Heart left ventricle (tissue), 16 donors: ENCODE measurements at regions of chr6 and their contacts with region 1.

Region 1: GRCh38 chr6:145734486-145735355 is 599 bp downstream of the EPM2A start:
- DNase-seq: peak; percentile 91 to 95 (median 94)
- ATAC-seq: peak; percentile 84 to 97 (median 92)
- H3K4me3 ChIP-seq: peak overlapping the region; percentile 43 to 87 (median 72)
- H3K27ac ChIP-seq: peak overlapping the region; percentile 90 to 99 (median 96)
- H3K4me1 ChIP-seq: peaks cover 0 to 38% (median 14%) of the 10 kb centered on the region in 12 donors
- H3K27me3 ChIP-seq: no peaks in the 10 kb centered on the region
- CTCF ChIP-seq: peak in 2 of 12 donors; percentile 3 to 8
- POLR2A ChIP-seq: peak in 1 of 2 donors; percentile 67

Region 2: GRCh38 chr6:145814501-145815308 is 80.0 kb after region 1 on chr6 and contains the start of gene FBXO30:
- intact Hi-C with region 1: loop called in 9 of 10 experiments (anchors 1 to 10 kb)
- DNase-seq: peak; percentile 88 to 94 (median 90)
- ATAC-seq: peak; percentile 91 to 98 (median 97)
- H3K4me3 ChIP-seq: peak within 1 kb of the TSS; percentile 50 to 82 (median 72)
- H3K27ac ChIP-seq: peak within 1 kb of the TSS; percentile 87 to 97 (median 94)
- H3K4me1 ChIP-seq: peaks cover 0 to 58% (median 40%) of the 10 kb centered on the region in 12 donors
- H3K27me3 ChIP-seq: no peaks in the 10 kb centered on the region
- CTCF ChIP-seq: peak in 3 of 12 donors; percentile 7 to 26 (median 9)
- POLR2A ChIP-seq: peak; percentile 26 to 91
- total RNA-seq, gene FBXO30: 9.0 to 17.1 (median 14.4) TPM

Region 3: DNA sequence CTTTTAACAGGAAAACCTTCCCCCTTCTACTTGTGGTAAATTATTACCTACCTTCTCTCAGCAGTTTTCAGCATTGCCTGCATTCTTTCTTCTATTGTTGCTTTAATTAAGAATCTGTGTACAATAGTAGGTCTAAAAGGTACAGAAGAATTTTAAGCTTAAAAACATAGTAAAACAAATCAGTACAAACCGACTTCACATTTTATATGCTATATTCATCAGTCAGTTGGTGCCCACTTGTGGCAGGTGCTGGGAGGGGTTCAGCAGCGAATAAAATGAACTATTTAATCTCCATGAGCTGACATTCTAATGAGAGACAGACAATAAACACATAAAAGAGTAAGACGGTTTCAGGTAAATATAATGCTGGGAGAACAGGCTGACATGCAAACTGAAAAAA is 153.2 kb after region 1 on chr6:
- intact Hi-C with region 1: loop called in 8 of 10 experiments (anchors 10 kb)
- DNase-seq: peak in 2 of 5 donors; percentile 23 to 26
- ATAC-seq: peak in 2 of 4 donors; percentile 53 to 55
- H3K4me3 ChIP-seq: no peak overlapping the region
- H3K27ac ChIP-seq: peak overlapping the region in 1 of 12 donors; percentile 34
- H3K4me1 ChIP-seq: peaks cover 0 to 8% (median 0%) of the 10 kb centered on the region in 12 donors
- H3K27me3 ChIP-seq: no peaks in the 10 kb centered on the region
- CTCF ChIP-seq: peak in 11 of 12 donors; percentile 34 to 68 (median 54)
- POLR2A ChIP-seq: no peak

Region 4: GRCh38 chr6:145895802-145896201 is 161.1 kb after region 1 on chr6:
- intact Hi-C with region 1: loop called in 1 of 10 experiments (anchors 10 kb)
- DNase-seq: no peak
- ATAC-seq: no peak
- H3K4me3 ChIP-seq: no peak overlapping the region
- H3K27ac ChIP-seq: no peak overlapping the region
- H3K4me1 ChIP-seq: peaks cover 0 to 7% (median 0%) of the 10 kb centered on the region in 12 donors
- H3K27me3 ChIP-seq: no peaks in the 10 kb centered on the region
- CTCF ChIP-seq: peak in 3 of 12 donors; percentile 16 to 26 (median 21)
- POLR2A ChIP-seq: no peak